ENCODE measurements at regions of chr6 and their contacts with region 1.

Region 1: GRCh38 chr6:7312616-7313504 is at the start of gene SSR1:
- DNase-seq: peak; percentile 97
- ATAC-seq: peak; percentile 97
- H3K4me3 Mint-ChIP-seq: peak within 1 kb of the TSS; percentile 90
- H3K27ac Mint-ChIP-seq: peak within 1 kb of the TSS; percentile 86
- H3K4me1 Mint-ChIP-seq: peaks cover 54% of the 10 kb centered on the region
- H3K27me3 Mint-ChIP-seq: no peaks in the 10 kb centered on the region
- total RNA-seq, gene SSR1: 122 to 130 TPM

Region 2: DNA sequence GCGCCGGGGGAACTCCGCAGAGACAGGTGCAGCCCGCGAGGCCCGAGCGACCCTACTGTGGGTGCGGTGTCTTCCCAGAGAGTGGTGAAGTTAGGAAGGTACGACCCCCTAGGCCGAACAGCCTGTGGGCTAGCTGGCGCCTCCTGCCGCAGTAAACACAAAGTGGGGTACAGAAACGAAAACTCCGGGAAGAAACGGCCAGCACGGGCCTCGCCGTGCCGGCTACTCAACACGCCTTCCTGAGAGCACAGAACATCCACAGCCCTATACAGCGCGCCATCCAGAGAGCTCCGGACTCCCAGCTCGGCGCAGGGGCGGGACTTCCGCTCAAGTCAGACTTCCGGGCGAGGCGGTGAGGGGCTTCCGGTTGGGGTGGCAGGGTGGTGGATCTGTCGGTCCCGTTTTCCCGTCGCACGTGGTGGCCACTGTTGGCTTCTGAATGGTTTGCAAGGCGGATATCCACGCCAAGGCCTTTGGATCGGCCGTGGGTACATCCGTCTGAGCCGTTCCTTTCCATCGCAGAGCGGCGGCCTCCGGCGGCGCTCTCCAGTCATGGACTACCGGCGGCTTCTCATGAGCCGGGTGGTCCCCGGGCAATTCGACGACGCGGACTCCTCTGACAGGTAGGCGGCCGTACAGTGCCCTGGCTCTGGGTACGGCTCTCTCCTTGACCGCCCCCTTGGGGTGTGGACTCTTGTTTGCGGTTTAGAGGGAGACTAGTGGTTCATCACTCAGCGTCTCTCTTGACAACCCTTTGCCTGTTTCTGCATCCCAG is 76.8 kb after region 1 on chr6 and contains the starts of genes CAGE1 and RIOK1:
- CTCF ChIA-PET with region 1: interaction called, 6 read pairs
- POLR2A ChIA-PET with region 1: interaction called, 23 read pairs
- DNase-seq: peak; percentile 96
- ATAC-seq: peak; percentile 96
- H3K4me3 Mint-ChIP-seq: peak within 1 kb of the TSS; percentile 79
- H3K27ac Mint-ChIP-seq: peak within 1 kb of the TSS; percentile 98
- H3K4me1 Mint-ChIP-seq: peaks cover 39% of the 10 kb centered on the region
- H3K27me3 Mint-ChIP-seq: no peaks in the 10 kb centered on the region
- total RNA-seq, gene CAGE1: 0.16 to 0.18 TPM
- total RNA-seq, gene RIOK1: 35.8 to 37.0 TPM